ENCODE measurements at regions of chr15 and their contacts with region 1.

Region 1: DNA sequence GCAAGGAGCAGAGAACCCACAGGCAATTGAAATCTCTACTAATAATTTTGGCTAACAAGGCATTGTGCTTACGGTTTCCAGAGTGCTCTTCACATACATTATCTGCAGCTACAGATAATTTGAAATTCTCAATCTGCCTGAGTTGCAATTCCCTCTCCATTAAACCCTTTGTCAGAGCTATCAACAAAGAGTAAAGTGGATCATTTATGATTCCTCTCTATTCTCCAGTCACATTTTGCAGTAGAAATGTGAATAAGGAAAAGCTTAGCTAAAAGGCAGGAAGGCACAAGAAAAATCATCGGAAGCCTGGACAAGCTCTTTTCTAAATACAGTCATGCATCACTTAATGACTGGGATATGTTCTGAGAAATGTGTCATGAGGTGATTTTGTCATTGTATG is 49.6 kb downstream of the FAM98B start:
- H3K4me3 ChIP-seq: no peak overlapping the region
- H3K27ac ChIP-seq: no peak overlapping the region
- H3K4me1 ChIP-seq: no peaks in the 10 kb centered on the region
- CTCF ChIP-seq: no peak

Region 2: DNA sequence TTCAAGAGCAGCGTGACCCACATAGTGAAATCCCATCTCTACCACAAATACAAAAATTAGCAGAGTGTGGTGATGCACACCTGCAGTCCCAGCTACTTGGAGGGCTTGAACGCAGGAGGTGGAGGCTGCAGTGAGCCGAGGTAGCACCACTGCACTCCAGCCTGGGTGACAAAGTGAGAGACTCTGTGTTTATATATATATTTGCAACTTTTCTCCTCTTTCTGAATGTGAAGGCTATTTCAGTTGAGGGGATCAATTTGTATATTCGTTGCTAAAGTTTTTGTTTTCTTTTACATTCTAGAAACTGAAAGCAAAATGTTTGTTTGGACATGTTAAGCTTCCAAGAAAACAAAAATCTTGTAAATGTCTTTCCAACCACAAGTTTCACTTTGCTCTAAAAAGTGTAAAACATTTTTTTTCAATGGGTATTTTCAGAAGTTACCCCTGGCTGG is 79.4 kb before region 1 on chr15:
- CTCF ChIA-PET with region 1: no interaction called
- POLR2A ChIA-PET with region 1: no interaction called
- H3K4me3 ChIP-seq: no peak overlapping the region
- H3K27ac ChIP-seq: no peak overlapping the region
- H3K4me1 ChIP-seq: no peaks in the 10 kb centered on the region
- CTCF ChIP-seq: no peak

Region 3: DNA sequence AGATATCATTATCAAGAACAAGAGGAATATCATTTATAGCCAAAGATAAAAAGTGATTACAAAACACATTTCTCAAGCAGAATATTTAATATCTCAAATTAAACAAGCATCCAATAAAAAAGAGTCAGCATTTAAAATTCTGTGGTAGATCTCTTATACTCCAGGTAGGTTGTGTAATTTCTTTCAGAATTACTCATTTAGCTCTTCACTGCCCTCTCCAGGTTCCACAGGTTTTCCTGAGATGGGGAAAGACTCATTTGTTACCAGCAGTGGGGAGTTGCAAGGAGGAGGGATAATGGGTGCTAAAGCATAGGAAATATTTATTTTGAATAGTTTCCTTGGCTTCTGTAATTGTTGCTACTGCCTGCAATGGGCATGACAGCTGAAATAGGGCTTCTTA is 144.2 kb after region 1 on chr15:
- CTCF ChIA-PET with region 1: no interaction called
- POLR2A ChIA-PET with region 1: interaction called, 10 read pairs
- H3K4me3 ChIP-seq: no peak overlapping the region
- H3K27ac ChIP-seq: no peak overlapping the region
- H3K4me1 ChIP-seq: no peaks in the 10 kb centered on the region
- CTCF ChIP-seq: no peak